T-cell (primary cell): ENCODE measurements at regions of chr6 and their contacts with region 1.

Region 1: GRCh38 chr6:139291813-139292619 is at the start of gene TXLNB:
- DNase-seq: peak; percentile 51 to 91 (median 79)
- ATAC-seq: peak; percentile 87 to 97 (median 94)
- H3K4me3 ChIP-seq: peak within 1 kb of the TSS in 1 of 2 donors; percentile 44
- H3K4me3 Mint-ChIP-seq: peak within 1 kb of the TSS; percentile 67 to 78 (median 77)
- H3K27ac ChIP-seq: peak within 1 kb of the TSS; percentile 95
- H3K27ac Mint-ChIP-seq: peak within 1 kb of the TSS; percentile 97 to 98
- H3K4me1 ChIP-seq: peaks cover 30 to 34% of the 10 kb centered on the region in 2 experiments
- H3K4me1 Mint-ChIP-seq: peaks cover 63 to 78% (median 74%) of the 10 kb centered on the region in 3 donors
- H3K27me3 ChIP-seq: no peaks in the 10 kb centered on the region
- H3K27me3 Mint-ChIP-seq: no peaks in the 10 kb centered on the region
- total RNA-seq, gene TXLNB: 0.41 to 0.92 (median 0.72) TPM

Region 2: GRCh38 chr6:137736048-137736818 is 1555.8 kb before region 1 on chr6:
- CTCF ChIA-PET with region 1: no interaction called
- POLR2A ChIA-PET with region 1: no interaction called
- DNase-seq: peak in 11 of 35 experiments; percentile 2 to 54 (median 9)
- ATAC-seq: peak; percentile 88 to 92 (median 90)
- H3K4me3 ChIP-seq: no peak overlapping the region
- H3K4me3 Mint-ChIP-seq: peak overlapping the region in 1 of 3 donors; percentile 25
- H3K27ac ChIP-seq: peak overlapping the region; percentile 27
- H3K27ac Mint-ChIP-seq: peak overlapping the region; percentile 72 to 89
- H3K4me1 ChIP-seq: peaks cover 7 to 9% of the 10 kb centered on the region in 2 experiments
- H3K4me1 Mint-ChIP-seq: peaks cover 10 to 29% (median 23%) of the 10 kb centered on the region in 3 donors
- H3K27me3 ChIP-seq: peaks cover 0 to 3% of the 10 kb centered on the region in 2 experiments
- H3K27me3 Mint-ChIP-seq: no peaks in the 10 kb centered on the region

Region 3: DNA sequence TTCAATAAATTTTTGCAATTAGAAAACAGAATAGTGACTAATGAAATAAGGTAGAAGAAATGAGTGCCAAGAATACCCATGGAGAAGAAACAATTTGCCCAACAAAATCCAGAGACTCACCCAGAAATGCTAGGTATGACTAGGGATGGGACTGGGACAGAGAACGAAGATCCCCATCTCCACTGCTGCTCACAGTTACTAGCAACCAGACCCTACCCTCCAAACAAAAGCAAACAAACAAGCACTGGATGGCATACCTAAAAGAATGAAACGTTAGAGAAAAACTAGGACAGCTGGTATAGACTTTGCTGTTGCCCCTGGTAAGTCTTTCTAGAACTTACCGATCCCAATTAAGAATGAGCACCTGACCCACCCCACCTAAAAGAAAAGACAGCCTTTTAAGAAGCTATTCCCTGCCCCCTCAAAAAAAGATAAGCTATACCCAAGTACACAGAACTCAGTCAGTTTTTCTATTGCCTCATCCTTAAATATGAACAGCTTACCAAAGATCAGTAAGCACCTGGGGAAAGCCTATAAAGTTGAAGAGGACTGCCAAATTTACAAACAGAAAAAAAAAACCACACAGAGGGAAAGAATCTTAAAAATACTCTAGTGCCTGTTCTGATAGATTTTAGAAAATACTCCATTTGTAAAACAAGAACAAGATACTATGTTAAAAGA is 335.6 kb before region 1 on chr6:
- CTCF ChIA-PET with region 1: no interaction called
- POLR2A ChIA-PET with region 1: interaction called in 1 of 2 experiments, 14 read pairs
- DNase-seq: no peak
- ATAC-seq: no peak
- H3K4me3 ChIP-seq: no peak overlapping the region
- H3K4me3 Mint-ChIP-seq: peak overlapping the region in 1 of 3 donors; percentile 11
- H3K27ac ChIP-seq: no peak overlapping the region
- H3K27ac Mint-ChIP-seq: peak overlapping the region in 1 of 2 donors; percentile 14
- H3K4me1 ChIP-seq: peaks cover 7 to 19% of the 10 kb centered on the region in 2 experiments
- H3K4me1 Mint-ChIP-seq: peaks cover 84 to 86% (median 85%) of the 10 kb centered on the region in 3 donors
- H3K27me3 ChIP-seq: no peaks in the 10 kb centered on the region
- H3K27me3 Mint-ChIP-seq: no peaks in the 10 kb centered on the region

Region 4: GRCh38 chr6:140253096-140253495 is 961.1 kb after region 1 on chr6:
- CTCF ChIA-PET with region 1: no interaction called
- POLR2A ChIA-PET with region 1: no interaction called
- DNase-seq: no peak
- ATAC-seq: no peak
- H3K4me3 ChIP-seq: no peak overlapping the region
- H3K4me3 Mint-ChIP-seq: no peak overlapping the region
- H3K27ac ChIP-seq: no peak overlapping the region
- H3K27ac Mint-ChIP-seq: no peak overlapping the region
- H3K4me1 ChIP-seq: no peaks in the 10 kb centered on the region
- H3K4me1 Mint-ChIP-seq: no peaks in the 10 kb centered on the region
- H3K27me3 ChIP-seq: no peaks in the 10 kb centered on the region
- H3K27me3 Mint-ChIP-seq: peaks cover 3 to 4% of the 10 kb centered on the region in 2 donors